ENCODE measurements at regions of chr6 and their contacts with region 1.

Region 1: DNA sequence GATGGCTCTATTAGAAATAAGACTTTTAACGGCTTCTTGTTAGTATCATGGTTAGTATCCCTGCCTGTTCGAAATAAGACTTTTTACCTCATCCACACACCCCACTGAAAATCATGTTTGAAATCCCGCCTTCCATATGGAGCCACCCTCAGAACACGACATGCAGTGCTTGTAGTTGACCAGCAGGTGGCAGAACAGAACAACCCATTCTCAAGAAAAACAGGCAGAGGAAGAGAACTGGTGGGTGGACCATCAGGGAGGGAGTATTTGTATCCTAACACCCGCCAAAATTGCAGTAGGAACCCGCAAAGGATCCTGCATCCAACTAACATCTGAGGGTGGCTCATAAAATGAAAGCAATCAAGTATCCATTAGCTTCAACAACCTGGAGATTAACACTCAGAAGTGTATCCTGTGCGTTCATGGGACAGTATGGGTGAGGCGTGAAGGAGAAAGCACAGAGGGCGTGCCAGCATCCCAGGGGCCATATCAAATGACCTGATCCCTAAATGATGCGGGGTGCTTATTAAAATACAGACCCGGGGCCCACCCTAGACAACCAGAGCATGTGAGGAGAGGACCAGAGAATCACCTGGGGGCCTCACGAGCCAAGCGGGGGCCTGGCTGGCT is 89.6 kb upstream of the NHSL1 start:
- DNase-seq: peak; percentile 76 to 77
- H3K4me3 ChIP-seq: no peak overlapping the region
- H3K4me1 ChIP-seq: peaks cover 21% of the 10 kb centered on the region
- H3K27me3 ChIP-seq: no peaks in the 10 kb centered on the region

Region 2: GRCh38 chr6:138250513-138251247 is 338.2 kb before region 1 on chr6:
- in situ Hi-C with region 1: no loop called
- DNase-seq: no peak
- H3K4me3 ChIP-seq: no peak overlapping the region
- H3K4me1 ChIP-seq: no peaks in the 10 kb centered on the region
- H3K27me3 ChIP-seq: no peaks in the 10 kb centered on the region

Region 3: GRCh38 chr6:138765896-138766655 is 177.2 kb after region 1 on chr6:
- in situ Hi-C with region 1: loop called (anchors 5 kb)
- DNase-seq: peak in 1 of 2 experiments; percentile 53
- H3K4me3 ChIP-seq: no peak overlapping the region
- H3K4me1 ChIP-seq: no peaks in the 10 kb centered on the region
- H3K27me3 ChIP-seq: no peaks in the 10 kb centered on the region

Measured in HAP-1 (cell line).